Activated CD4-positive, alpha-beta memory T cell treated with anti-CD3 and anti-CD28 coated beads for 36 hours (primary cell): ENCODE measurements at regions of chr12 and their contacts with region 1.

Region 1: DNA sequence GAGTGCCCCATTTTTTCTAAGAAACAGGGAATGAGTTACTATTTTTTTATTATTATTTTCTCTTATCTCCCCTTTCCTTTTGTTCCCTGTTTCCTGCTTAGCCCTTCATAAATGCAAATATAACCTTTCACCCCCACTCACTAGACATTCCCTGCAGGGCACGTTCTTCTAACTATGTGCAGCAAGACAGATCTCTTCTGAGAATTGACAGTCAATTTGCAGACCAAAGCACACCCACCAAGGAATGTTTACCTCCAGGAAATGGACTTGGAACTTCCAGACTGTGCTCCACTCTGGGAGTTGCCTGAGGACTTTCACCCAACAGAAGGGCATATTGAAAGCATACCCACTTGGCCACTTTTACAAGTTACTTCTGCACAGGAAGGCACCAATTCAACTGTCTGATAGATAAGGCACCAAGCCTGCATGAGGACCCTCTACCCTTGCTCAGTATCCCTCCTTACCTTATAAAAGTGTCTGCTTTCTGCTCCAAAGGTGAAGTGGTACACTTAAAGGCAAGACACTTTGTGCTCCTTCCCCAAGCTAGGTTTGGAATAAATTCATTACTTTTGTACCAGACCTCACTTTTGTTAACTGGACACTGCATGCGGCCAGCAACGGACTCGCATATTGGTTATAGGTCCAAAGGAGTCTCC is 6.5 kb downstream of the TAS2R19 start:
- DNase-seq: no peak
- H3K4me3 Mint-ChIP-seq: no peak overlapping the region
- H3K27ac Mint-ChIP-seq: no peak overlapping the region
- H3K4me1 Mint-ChIP-seq: no peaks in the 10 kb centered on the region
- H3K27me3 Mint-ChIP-seq: no peaks in the 10 kb centered on the region

Region 2: GRCh38 chr12:11026121-11026520 is 10.2 kb after region 1 on chr12:
- CTCF ChIA-PET with region 1: no interaction called
- POLR2A ChIA-PET with region 1: no interaction called
- intact Hi-C with region 1: no loop called
- DNase-seq: no peak
- H3K4me3 Mint-ChIP-seq: no peak overlapping the region
- H3K27ac Mint-ChIP-seq: no peak overlapping the region
- H3K4me1 Mint-ChIP-seq: peaks cover 2% of the 10 kb centered on the region
- H3K27me3 Mint-ChIP-seq: no peaks in the 10 kb centered on the region

Region 3: DNA sequence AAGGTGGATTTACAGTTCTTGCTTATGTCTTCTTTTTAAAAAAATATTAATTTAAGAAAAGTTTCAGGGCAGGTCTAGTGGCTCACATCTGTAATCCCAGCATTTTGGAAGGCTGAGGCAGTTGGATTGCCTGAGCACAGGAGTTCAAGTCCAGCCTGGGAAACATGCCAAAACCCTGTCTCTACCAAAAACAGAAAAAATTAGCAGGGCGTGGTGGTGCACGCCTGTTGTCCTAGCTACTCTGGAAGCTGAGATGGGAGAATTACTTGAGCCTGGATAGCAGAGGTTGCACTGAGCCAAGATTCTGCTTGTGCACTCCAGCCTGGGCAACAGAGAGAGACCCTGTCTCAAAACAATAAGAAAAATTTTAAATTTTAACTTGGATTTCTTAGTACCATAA is 51.6 kb after region 1 on chr12:
- CTCF ChIA-PET with region 1: no interaction called
- POLR2A ChIA-PET with region 1: interaction called, 3 read pairs
- intact Hi-C with region 1: loop called (anchors 2 kb)
- DNase-seq: no peak
- H3K4me3 Mint-ChIP-seq: no peak overlapping the region
- H3K27ac Mint-ChIP-seq: no peak overlapping the region
- H3K4me1 Mint-ChIP-seq: peaks cover 4% of the 10 kb centered on the region
- H3K27me3 Mint-ChIP-seq: no peaks in the 10 kb centered on the region

Region 4: GRCh38 chr12:11075642-11076041 is 59.7 kb after region 1 on chr12:
- CTCF ChIA-PET with region 1: no interaction called
- POLR2A ChIA-PET with region 1: no interaction called
- intact Hi-C with region 1: loop called (anchors 1 kb)
- DNase-seq: no peak
- H3K4me3 Mint-ChIP-seq: no peak overlapping the region
- H3K27ac Mint-ChIP-seq: no peak overlapping the region
- H3K4me1 Mint-ChIP-seq: peaks cover 4% of the 10 kb centered on the region
- H3K27me3 Mint-ChIP-seq: no peaks in the 10 kb centered on the region